ENCODE measurements at regions of chr2 and their contacts with region 1.

Region 1: DNA sequence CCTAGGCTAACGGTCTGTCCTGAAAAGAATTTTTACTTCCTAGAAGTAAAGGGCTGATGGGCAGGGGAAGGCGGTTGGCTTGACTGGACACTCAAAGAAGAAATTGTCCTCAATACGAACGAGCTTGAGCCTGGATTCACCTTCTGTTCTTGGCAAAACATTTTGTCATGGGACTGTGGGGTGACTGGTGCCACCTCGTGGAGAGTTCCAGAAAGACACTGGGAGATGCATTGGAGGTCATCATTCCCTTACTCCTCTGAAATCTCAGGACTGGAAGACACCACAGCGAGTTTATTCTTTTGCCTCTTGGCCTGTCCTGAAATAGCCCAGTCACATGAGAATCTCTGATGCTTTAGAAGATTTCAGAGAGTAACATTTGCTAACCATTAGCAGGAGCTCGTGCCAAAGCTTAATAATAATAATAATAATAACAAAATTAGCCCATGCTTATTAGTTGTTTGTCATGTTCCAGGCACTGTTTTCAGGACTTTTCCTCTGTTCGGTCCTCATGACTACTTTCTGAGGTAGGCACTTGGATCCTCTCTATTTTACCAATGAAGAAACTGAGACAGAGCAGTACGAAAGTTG is 44.5 kb downstream of the TMEM182 start:
- DNase-seq: peak; percentile 62 to 74 (median 68)
- ATAC-seq: peak; percentile 95
- H3K4me3 ChIP-seq: no peak overlapping the region
- H3K27ac ChIP-seq: no peak overlapping the region
- H3K4me1 ChIP-seq: no peaks in the 10 kb centered on the region; a peak in 3 of 5 replicates
- H3K27me3 ChIP-seq: no peaks in the 10 kb centered on the region
- CTCF ChIP-seq: peak; percentile 76 to 83 (median 82)
- EP300 ChIP-seq: no peak
- POLR2A ChIP-seq: no peak
- RAD21 ChIP-seq: peak; percentile 45 to 73

Region 2: DNA sequence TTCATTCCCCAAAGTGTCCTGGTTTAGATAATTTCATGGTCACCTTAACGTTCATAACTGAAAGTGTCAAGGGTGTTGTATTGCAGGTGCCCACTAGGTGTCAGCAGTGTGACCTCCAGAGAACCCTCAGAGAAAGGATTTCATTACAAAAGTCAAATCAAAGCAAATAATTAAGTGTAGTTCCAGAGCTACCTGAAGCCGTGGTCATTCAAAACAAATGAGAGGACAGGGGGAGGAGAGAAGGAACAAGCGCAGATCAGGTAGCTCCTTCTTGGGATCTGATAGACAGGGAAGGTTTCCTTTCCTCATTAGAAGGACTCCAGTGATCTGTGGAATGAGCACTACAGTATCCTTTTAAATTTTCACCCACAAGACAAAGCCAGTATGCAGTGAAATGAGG is 333.3 kb before region 1 on chr2 and contains the start of gene SLC9A4:
- CTCF ChIA-PET with region 1: no interaction called
- POLR2A ChIA-PET with region 1: no interaction called
- in situ Hi-C with region 1: no loop called
- intact Hi-C with region 1: loop called (anchors 10 kb)
- DNase-seq: peak; percentile 25 to 60 (median 53)
- ATAC-seq: peak; percentile 72
- H3K4me3 ChIP-seq: no peak within 1 kb of the TSS
- H3K27ac ChIP-seq: no peak within 1 kb of the TSS
- H3K4me1 ChIP-seq: no peaks in the 10 kb centered on the region
- H3K27me3 ChIP-seq: peaks cover 0 to 5% of the 10 kb centered on the region in 2 experiments; a peak in 2 of 5 replicates
- CTCF ChIP-seq: peak; percentile 59 to 82 (median 80)
- EP300 ChIP-seq: no peak
- POLR2A ChIP-seq: no peak
- RAD21 ChIP-seq: peak; percentile 68 to 80
- polyA plus RNA-seq, gene SLC9A4: 0.15 TPM in 1 of 2 experiments, not detected in the other

Region 3: GRCh38 chr2:102520028-102520427 is 286.3 kb before region 1 on chr2:
- CTCF ChIA-PET with region 1: interaction called, 3 read pairs
- POLR2A ChIA-PET with region 1: no interaction called
- in situ Hi-C with region 1: no loop called
- intact Hi-C with region 1: loop called (anchors 1 kb)
- DNase-seq: peak; percentile 24 to 70 (median 42)
- ATAC-seq: peak; percentile 92
- H3K4me3 ChIP-seq: no peak overlapping the region
- H3K27ac ChIP-seq: no peak overlapping the region
- H3K4me1 ChIP-seq: no peaks in the 10 kb centered on the region
- H3K27me3 ChIP-seq: peaks cover 5 to 9% of the 10 kb centered on the region in 2 experiments; a peak in 2 of 5 replicates
- CTCF ChIP-seq: peak; percentile 75 to 91 (median 84)
- EP300 ChIP-seq: no peak
- POLR2A ChIP-seq: no peak
- RAD21 ChIP-seq: peak; percentile 73 to 89

Region 4: GRCh38 chr2:102753563-102754159 is 52.7 kb before region 1 on chr2:
- CTCF ChIA-PET with region 1: interaction called, 5 read pairs
- POLR2A ChIA-PET with region 1: no interaction called
- in situ Hi-C with region 1: no loop called
- intact Hi-C with region 1: loop called (anchors 1 kb)
- DNase-seq: peak; percentile 35 to 56 (median 37)
- ATAC-seq: peak; percentile 79
- H3K4me3 ChIP-seq: no peak overlapping the region
- H3K27ac ChIP-seq: no peak overlapping the region
- H3K4me1 ChIP-seq: no peaks in the 10 kb centered on the region
- H3K27me3 ChIP-seq: no peaks in the 10 kb centered on the region; a peak in 1 of 5 replicates
- CTCF ChIP-seq: peak; percentile 32 to 78 (median 75); a peak in 5 of 6 replicates
- EP300 ChIP-seq: no peak
- POLR2A ChIP-seq: no peak
- RAD21 ChIP-seq: peak in 1 of 2 experiments; percentile 55; a peak in 3 of 4 replicates

Region 5: DNA sequence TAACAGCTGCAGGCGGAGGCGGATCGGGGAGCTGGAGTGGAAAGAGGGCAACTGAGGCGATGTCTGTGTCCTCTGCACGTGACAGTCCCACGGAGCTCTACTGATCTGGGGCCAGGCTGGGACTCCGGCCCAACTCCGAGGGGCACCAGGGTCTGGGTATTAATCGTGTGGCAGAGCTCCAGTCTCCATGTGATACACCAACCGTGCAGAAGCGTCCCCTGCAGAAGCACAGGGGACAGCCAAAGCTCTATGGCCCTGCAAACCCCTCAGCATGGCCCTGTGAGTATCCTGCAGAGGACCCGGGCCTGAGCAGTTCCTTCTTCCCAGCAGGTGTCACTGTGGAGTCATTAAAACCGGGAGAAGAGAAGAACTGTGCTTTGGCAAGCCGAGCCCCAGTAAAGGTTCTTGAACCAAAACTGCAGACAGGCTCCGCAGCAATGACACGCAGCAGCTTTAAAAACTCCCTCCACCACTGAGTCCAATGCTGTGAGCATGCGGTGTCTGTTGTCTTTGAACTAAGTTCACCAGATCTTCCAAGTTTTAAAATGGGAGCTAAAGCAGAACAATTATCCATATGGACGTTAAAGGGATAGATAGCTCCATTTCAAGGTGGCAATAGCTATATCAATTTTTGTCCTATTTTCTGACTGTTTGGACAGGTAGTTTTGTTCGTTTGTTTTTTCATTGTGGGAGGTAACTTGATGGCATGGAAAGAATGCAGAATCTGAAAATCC is 34.9 kb after region 1 on chr2:
- CTCF ChIA-PET with region 1: no interaction called
- POLR2A ChIA-PET with region 1: no interaction called
- in situ Hi-C with region 1: no loop called
- intact Hi-C with region 1: no loop called
- DNase-seq: peak; percentile 35 to 63 (median 47)
- ATAC-seq: peak; percentile 98
- H3K4me3 ChIP-seq: no peak overlapping the region
- H3K27ac ChIP-seq: no peak overlapping the region
- H3K4me1 ChIP-seq: no peaks in the 10 kb centered on the region; a peak in 1 of 5 replicates
- H3K27me3 ChIP-seq: peaks cover 0 to 11% of the 10 kb centered on the region in 2 experiments; a peak in 2 of 5 replicates
- CTCF ChIP-seq: peak; percentile 58 to 73 (median 69)
- EP300 ChIP-seq: no peak
- POLR2A ChIP-seq: no peak
- RAD21 ChIP-seq: peak; percentile 55 to 70

Region 6: DNA sequence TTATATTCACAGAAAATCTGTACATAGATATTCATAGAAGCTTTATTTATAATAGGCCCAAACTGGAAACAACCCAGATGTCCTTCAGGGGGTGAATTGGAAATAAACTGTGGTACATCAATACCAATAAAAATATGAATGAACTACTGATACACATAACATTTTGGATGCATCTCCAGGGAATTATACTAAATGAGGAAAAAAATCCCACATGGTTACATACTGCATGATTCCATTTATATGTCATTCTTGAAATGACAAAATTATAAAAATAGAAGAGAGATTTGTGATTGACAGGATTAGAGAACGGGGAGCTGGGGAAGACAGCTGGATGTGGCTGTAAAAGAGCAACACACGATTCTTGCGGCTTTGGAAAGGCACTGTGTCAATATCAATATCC is 390.5 kb after region 1 on chr2:
- CTCF ChIA-PET with region 1: no interaction called
- POLR2A ChIA-PET with region 1: no interaction called
- in situ Hi-C with region 1: no loop called
- intact Hi-C with region 1: no loop called
- DNase-seq: no peak
- ATAC-seq: no peak
- H3K4me3 ChIP-seq: no peak overlapping the region
- H3K27ac ChIP-seq: no peak overlapping the region
- H3K4me1 ChIP-seq: no peaks in the 10 kb centered on the region
- H3K27me3 ChIP-seq: no peaks in the 10 kb centered on the region
- CTCF ChIP-seq: no peak
- EP300 ChIP-seq: no peak
- POLR2A ChIP-seq: no peak
- RAD21 ChIP-seq: no peak

Region 7: GRCh38 chr2:104658144-104658835 is 1851.9 kb after region 1 on chr2:
- CTCF ChIA-PET with region 1: no interaction called
- POLR2A ChIA-PET with region 1: no interaction called
- in situ Hi-C with region 1: loop called (anchors 10 kb)
- intact Hi-C with region 1: no loop called
- DNase-seq: no peak
- ATAC-seq: peak; percentile 68
- H3K4me3 ChIP-seq: no peak overlapping the region
- H3K27ac ChIP-seq: no peak overlapping the region
- H3K4me1 ChIP-seq: peaks cover 0 to 7% of the 10 kb centered on the region in 2 experiments; a peak in 2 of 5 replicates
- H3K27me3 ChIP-seq: peaks cover 8 to 28% of the 10 kb centered on the region in 2 experiments; a peak in 4 of 5 replicates
- CTCF ChIP-seq: no peak
- EP300 ChIP-seq: no peak
- POLR2A ChIP-seq: no peak
- RAD21 ChIP-seq: no peak